CD14-positive monocyte (primary cell): ENCODE measurements at regions of chr12 and their contacts with region 1.

Region 1: DNA sequence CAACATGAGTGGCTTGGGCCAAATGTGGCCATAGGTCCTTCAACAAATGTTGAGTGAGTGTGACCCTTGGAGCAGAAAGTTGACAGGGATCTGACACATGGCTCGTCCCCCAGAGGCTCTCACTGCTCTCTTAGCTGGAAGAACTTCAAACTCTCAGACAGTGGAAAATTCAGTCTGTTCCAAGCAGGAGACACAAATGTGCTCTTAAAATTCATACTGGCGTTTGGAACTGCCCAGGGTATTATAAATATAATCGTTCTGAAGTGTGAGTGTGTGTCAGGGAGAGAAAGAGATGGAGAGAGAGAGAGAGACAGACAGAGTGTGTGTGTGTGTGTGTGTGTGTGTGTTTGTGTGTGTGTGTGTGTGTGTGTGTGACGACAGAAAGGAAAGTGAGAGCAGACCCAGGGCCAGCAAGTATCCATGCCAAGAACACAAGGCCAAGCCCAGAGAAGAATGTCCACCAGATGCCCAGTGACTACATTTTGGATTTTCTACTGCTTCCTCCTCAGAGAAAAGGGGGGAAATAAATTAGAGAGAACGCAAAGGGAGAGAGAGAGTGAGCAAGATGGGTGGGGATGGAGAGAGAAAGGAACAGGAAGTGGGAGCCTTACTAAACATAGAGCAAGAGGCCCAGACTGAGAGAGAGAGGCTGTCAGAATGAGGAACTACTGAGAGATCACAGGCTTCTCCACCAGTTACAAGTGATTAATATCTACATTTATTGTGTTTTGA is 193.6 kb upstream of the NUDT4 start:
- DNase-seq: peak; percentile 83 to 90 (median 85)
- H3K4me3 ChIP-seq: peak overlapping the region in 1 of 3 experiments; percentile 50
- H3K4me3 Mint-ChIP-seq: peak overlapping the region in 1 of 2 donors; percentile 77
- H3K27ac ChIP-seq: peak overlapping the region; percentile 87 to 91
- H3K27ac Mint-ChIP-seq: peak overlapping the region; percentile 92 to 97 (median 93)
- H3K4me1 ChIP-seq: peaks cover 37 to 41% of the 10 kb centered on the region in 2 donors
- H3K4me1 Mint-ChIP-seq: peaks cover 45% of the 10 kb centered on the region
- H3K27me3 ChIP-seq: no peaks in the 10 kb centered on the region
- H3K27me3 Mint-ChIP-seq: peaks cover 0 to 1% (median 0%) of the 10 kb centered on the region in 3 donors
- CTCF ChIP-seq: no peak

Region 2: GRCh38 chr12:93127582-93128331 is 56.3 kb before region 1 on chr12:
- intact Hi-C with region 1: loop called in 1 of 2 experiments (anchors 10 kb)
- DNase-seq: peak; percentile 83 to 90 (median 87)
- H3K4me3 ChIP-seq: no peak overlapping the region
- H3K4me3 Mint-ChIP-seq: peak overlapping the region in 1 of 2 donors; percentile 21
- H3K27ac ChIP-seq: peak overlapping the region; percentile 16 to 39
- H3K27ac Mint-ChIP-seq: peak overlapping the region; percentile 23 to 86 (median 67)
- H3K4me1 ChIP-seq: peaks cover 44 to 45% of the 10 kb centered on the region in 2 donors
- H3K4me1 Mint-ChIP-seq: peaks cover 38% of the 10 kb centered on the region
- H3K27me3 ChIP-seq: no peaks in the 10 kb centered on the region
- H3K27me3 Mint-ChIP-seq: peaks cover 0 to 2% (median 1%) of the 10 kb centered on the region in 3 donors
- CTCF ChIP-seq: peak; percentile 70

Region 3: DNA sequence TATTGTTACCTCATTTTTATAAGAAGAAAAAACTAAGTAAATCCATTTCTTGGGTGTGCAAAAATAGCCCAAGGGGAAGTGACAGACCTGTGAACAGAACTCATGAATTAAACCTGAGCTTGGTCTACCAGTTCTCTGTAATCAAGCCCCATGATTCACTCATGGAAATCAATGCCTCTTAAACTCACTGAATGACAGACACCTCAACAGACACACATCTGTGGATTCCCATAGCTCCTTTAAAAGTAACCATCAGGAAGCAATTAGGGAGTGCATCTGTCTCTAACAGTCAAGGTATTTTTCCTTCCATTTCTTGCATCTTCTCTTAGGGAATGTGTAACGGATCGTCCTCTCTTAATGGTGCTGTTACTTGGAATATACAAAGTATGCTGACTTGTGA is 40.0 kb before region 1 on chr12:
- intact Hi-C with region 1: loop called in 1 of 2 experiments (anchors 5 kb)
- DNase-seq: no peak
- H3K4me3 ChIP-seq: no peak overlapping the region
- H3K4me3 Mint-ChIP-seq: no peak overlapping the region
- H3K27ac ChIP-seq: no peak overlapping the region
- H3K27ac Mint-ChIP-seq: no peak overlapping the region
- H3K4me1 ChIP-seq: peaks cover 12 to 13% of the 10 kb centered on the region in 2 donors
- H3K4me1 Mint-ChIP-seq: peaks cover 16% of the 10 kb centered on the region
- H3K27me3 ChIP-seq: no peaks in the 10 kb centered on the region
- H3K27me3 Mint-ChIP-seq: peaks cover 0 to 2% (median 0%) of the 10 kb centered on the region in 3 donors
- CTCF ChIP-seq: no peak